ENCODE measurements at regions of chr1 and their contacts with region 1.

Region 1: DNA sequence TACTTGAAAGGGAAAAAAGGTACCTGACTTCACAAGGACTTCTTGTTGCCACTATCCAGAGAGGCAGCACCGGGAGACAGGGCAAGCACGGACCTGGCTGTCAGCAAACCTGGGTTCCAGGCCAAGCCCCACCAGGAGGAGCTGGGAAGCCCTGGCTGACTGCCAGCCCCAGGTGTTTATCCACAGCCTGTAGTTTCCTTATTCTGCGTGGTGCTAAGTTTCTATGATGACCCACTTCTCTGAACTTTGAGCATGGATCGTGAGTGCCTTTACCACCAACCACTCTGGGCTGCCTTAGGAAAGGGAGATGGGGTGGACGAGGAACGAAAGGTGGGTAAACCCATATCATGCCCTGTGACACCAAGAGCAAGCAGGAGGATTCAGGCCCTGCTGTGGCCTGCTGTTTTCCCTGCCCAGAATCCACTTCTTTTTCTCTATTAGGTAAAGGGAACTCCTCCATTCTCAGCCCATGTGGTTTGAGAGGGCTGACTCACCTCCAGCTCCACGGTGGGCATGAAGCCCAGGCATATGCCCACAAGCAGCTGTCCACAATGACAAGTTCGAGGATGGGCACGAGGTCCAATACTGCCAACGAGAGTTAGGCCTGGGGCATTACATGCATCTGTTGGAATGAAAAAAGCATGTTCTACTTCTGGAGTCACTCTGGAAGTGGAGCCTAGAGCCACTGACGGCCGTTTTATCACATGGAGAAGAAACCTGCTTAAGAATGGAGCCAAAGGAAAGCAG is 20.3 kb downstream of the TSPAN2 start:
- DNase-seq: peak; percentile 50 to 84 (median 79)
- H3K4me3 ChIP-seq: no peak overlapping the region
- H3K27ac ChIP-seq: no peak overlapping the region
- H3K4me1 ChIP-seq: peaks cover 0 to 26% (median 8%) of the 10 kb centered on the region in 4 experiments
- H3K27me3 ChIP-seq: no peaks in the 10 kb centered on the region

Region 2: DNA sequence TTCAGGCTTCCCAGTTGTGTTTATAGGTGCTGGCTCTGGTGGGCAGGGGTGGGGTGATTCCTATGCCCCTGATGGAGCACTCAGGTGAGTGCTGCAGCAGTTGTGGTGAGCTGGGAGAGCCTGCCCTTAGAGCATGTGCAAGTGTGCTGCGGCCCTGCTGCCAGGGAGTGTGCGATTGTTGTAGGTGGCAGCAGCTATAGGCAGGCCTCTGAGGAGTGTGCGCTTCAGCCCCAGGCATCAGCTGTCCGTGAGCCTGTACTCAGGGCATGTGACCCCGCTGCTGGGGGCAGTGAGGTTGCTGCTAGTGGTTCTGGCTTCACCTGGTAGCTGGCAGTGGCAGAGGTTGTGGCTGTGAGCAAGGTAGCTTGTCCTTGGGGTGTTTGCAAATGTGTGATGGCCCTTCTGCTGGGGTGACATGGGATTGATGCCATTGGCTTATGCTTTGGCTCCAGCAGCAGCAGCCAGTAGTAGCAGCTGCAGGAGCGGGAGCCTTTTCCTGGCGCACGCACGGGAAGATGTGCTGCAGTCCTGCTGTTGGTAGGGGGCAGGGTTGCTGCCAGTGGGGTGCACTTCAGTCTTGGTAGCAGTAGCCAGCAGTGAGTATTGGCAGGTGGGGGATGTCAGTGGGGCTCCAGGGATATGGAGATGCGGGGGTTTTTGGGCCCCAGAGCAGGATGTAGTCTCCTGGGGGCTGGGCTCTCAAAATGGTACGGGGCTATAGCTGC is 176.6 kb before region 1 on chr1:
- CTCF ChIA-PET with region 1: no interaction called
- POLR2A ChIA-PET with region 1: no interaction called
- DNase-seq: no peak
- H3K4me3 ChIP-seq: no peak overlapping the region
- H3K27ac ChIP-seq: no peak overlapping the region
- H3K4me1 ChIP-seq: no peaks in the 10 kb centered on the region
- H3K27me3 ChIP-seq: no peaks in the 10 kb centered on the region

Region 3: DNA sequence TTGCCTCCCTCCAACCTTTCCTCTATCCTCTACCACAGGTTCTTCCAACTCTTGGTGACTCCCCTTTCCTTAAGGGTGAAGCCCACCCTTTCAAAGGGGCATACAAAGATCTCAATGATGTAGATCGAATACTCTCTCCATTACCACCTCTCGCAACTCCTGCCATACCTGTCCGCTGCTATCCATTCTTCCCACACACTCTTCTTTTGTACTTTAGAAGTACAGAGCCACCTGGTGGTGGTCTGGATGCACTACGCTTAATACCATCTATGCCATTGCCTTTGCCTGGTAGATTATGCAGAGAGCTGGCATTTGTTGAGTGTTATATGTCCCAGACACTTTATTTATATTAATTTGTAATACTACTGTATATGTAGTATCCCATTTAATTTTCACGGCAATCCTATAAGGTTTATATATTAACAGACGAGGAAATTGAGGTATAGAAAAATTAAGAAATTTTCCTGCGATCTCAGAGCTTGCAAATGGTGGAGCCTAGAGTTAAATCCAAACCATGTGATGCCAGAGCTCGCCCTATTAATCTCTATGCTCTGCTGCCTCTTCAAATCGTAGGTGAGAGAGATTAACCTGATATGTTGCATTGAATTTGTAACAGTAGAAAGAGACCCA is 16.4 kb before region 1 on chr1:
- CTCF ChIA-PET with region 1: interaction called, 10 read pairs
- POLR2A ChIA-PET with region 1: no interaction called
- DNase-seq: peak; percentile 38 to 70 (median 60)
- H3K4me3 ChIP-seq: no peak overlapping the region
- H3K27ac ChIP-seq: no peak overlapping the region
- H3K4me1 ChIP-seq: no peaks in the 10 kb centered on the region
- H3K27me3 ChIP-seq: no peaks in the 10 kb centered on the region

Region 4: DNA sequence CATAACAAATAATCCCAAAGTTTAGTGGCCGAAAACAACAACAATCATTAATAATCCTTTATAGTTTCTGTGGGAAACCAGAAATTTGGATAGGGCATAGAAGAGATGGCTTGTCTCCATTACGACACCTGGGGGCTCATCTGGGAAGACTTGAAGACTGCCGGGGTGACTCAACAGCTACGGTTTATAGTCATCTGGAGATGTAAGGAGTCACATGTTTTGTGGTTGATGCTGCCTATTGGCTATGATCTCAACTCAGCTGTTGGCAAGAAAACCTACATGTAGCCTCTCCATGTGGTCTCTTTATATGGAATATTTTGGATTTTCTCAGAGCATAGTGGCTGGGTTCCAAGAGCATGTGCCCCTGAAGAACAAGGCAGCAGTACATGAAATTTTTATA is 49.6 kb after region 1 on chr1:
- CTCF ChIA-PET with region 1: no interaction called
- POLR2A ChIA-PET with region 1: no interaction called
- DNase-seq: no peak
- H3K4me3 ChIP-seq: no peak overlapping the region
- H3K27ac ChIP-seq: no peak overlapping the region
- H3K4me1 ChIP-seq: peaks cover 0 to 6% (median 2%) of the 10 kb centered on the region in 4 experiments
- H3K27me3 ChIP-seq: no peaks in the 10 kb centered on the region